AG04449 (cell line): ENCODE measurements at regions of chr18 and their contacts with region 1.

Region 1: GRCh38 chr18:12934454-12935071 is 13.2 kb upstream of the SEH1L start:
- DNase-seq: no peak
- H3K4me3 ChIP-seq: no peak overlapping the region; the same call in 1 of the 2 replicates
- CTCF ChIP-seq: peak; percentile 90

Region 2: GRCh38 chr18:12711446-12711845 is 223.1 kb before region 1 on chr18:
- CTCF ChIA-PET with region 1: interaction called, 11 read pairs
- POLR2A ChIA-PET with region 1: no interaction called
- DNase-seq: no peak
- H3K4me3 ChIP-seq: no peak overlapping the region
- CTCF ChIP-seq: no peak

Region 3: GRCh38 chr18:12737243-12737902 is 197.2 kb before region 1 on chr18:
- CTCF ChIA-PET with region 1: interaction called, 307 read pairs
- POLR2A ChIA-PET with region 1: no interaction called
- DNase-seq: no peak
- H3K4me3 ChIP-seq: no peak overlapping the region
- CTCF ChIP-seq: no peak

Region 4: DNA sequence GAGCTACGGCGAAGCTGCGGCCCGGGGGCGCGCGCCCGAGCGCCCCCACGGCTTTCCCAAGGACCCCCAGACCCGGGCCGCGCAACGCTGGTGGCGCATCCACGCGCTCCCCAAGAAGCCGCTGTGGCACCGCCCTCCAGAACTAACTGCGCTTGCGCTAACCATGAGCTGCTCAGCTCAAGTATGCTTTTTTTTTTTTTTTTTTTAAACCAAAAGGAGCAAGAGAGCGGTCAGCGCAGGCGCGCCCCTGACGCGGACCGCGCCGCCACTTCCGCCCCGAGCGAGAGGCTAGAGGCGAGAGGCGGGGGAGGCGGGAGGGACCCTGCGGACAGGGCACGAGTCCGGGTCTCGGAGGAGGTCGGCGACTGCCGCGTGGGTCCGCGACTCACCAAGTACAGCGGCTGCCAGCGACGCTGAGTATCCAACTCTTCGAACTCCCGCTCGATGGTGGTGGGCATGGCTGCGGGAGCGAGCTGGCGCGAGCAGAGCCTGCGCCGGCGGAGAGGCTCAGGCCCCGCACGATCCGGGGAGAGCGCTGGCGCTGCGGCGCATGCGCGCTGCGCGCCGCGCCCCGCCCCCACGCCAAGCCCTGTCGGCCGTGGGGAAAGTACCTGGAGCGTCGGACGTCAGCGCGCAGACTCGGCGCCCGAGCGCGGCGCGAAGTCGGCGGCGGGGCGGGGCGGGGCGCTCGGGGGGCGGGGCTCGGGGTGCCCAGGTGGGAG is 50.7 kb before region 1 on chr18 and contains the start of gene PTPN2:
- CTCF ChIA-PET with region 1: interaction called, 11 read pairs
- POLR2A ChIA-PET with region 1: no interaction called
- DNase-seq: peak; percentile 67
- H3K4me3 ChIP-seq: peak within 1 kb of the TSS; percentile 93
- CTCF ChIP-seq: no peak

Region 5: GRCh38 chr18:12911025-12911928 is 23.3 kb before region 1 on chr18:
- CTCF ChIA-PET with region 1: interaction called, 22 read pairs
- POLR2A ChIA-PET with region 1: no interaction called
- DNase-seq: no peak
- H3K4me3 ChIP-seq: peak overlapping the region; percentile 32
- CTCF ChIP-seq: no peak

Region 6: DNA sequence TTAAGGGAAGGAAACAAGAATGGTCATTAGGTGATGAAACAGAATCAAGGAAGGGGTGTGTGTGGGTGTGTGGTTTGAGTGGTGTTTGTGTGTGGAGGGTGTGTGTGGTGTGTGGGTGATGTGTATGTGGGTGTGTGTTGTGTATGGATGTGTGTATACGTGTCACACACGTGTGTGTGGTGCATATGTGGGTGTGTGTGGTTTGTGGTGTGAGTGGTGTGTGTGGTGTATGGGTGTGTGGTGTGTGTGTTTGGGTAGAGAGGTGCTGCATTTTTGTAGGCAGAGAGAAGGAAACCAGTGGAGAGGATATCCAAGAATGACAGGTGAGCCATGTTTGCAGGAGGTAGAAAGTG is 55.5 kb after region 1 on chr18:
- CTCF ChIA-PET with region 1: no interaction called
- POLR2A ChIA-PET with region 1: no interaction called
- DNase-seq: no peak
- H3K4me3 ChIP-seq: peak overlapping the region; percentile 99
- CTCF ChIP-seq: no peak

Region 7: GRCh38 chr18:13036622-13037320 is 102.2 kb after region 1 on chr18:
- CTCF ChIA-PET with region 1: no interaction called
- POLR2A ChIA-PET with region 1: no interaction called
- DNase-seq: peak; percentile 28
- H3K4me3 ChIP-seq: no peak overlapping the region
- CTCF ChIP-seq: no peak